Ovary (tissue), 10 donors: ENCODE measurements at regions of chrX and their contacts with region 1.

Region 1: GRCh38 chrX:57821703-57822375 is 88.4 kb downstream of the ZXDA start:
- DNase-seq: peak in 4 of 5 donors; percentile 8 to 42 (median 14)
- H3K4me3 ChIP-seq: no peak overlapping the region
- H3K27ac ChIP-seq: no peak overlapping the region
- H3K4me1 ChIP-seq: no peaks in the 10 kb centered on the region
- H3K27me3 ChIP-seq: no peaks in the 10 kb centered on the region
- CTCF ChIP-seq: peak in 2 of 3 donors; percentile 61 to 70
- EP300 ChIP-seq: no peak
- POLR2A ChIP-seq: no peak

Region 2: DNA sequence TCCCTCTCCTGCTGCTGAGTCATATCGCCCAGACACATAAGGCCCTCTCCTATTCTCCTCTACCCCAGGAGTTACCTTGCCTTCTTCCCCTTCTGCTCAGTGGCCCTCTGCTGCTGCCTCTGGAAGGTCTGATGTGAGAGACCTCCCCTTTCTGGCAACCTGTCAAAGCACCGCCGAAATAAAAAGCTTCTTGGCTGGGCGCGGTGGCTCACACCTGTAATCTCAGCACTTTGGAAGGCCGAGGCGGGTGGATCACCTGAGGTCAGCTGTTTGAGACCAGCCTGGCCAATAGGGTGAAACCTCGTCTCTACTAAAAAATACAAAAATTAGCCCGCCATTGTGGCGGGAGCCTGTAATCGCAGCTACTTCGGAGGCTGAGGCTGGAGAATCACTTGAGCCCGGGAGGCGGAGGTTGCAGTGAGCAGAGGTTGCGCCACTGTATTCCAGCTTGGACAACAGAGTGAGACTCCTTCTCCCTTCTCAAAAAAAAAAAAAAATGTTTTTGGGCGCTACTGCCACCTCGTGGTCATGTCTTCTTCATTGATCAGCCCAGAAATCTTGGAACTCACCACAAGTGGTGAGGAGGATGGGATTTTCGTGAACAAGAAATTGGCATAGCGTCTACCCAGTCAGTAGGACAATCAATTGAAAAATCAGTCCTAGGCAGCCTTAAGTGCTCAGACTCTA is 97.1 kb after region 1 on chrX:
- intact Hi-C with region 1: loop called in 2 of 4 experiments (anchors 5 to 10 kb)
- DNase-seq: peak in 2 of 5 donors; percentile 17 to 22
- H3K4me3 ChIP-seq: no peak overlapping the region
- H3K27ac ChIP-seq: no peak overlapping the region
- H3K4me1 ChIP-seq: no peaks in the 10 kb centered on the region
- H3K27me3 ChIP-seq: no peaks in the 10 kb centered on the region
- CTCF ChIP-seq: peak in 1 of 3 donors; percentile 11
- EP300 ChIP-seq: no peak
- POLR2A ChIP-seq: no peak

Region 3: GRCh38 chrX:57929373-57929772 is 107.5 kb after region 1 on chrX:
- intact Hi-C with region 1: loop called in 2 of 4 experiments (anchors 5 to 10 kb)
- DNase-seq: no peak
- H3K4me3 ChIP-seq: no peak overlapping the region
- H3K27ac ChIP-seq: no peak overlapping the region
- H3K4me1 ChIP-seq: no peaks in the 10 kb centered on the region
- H3K27me3 ChIP-seq: no peaks in the 10 kb centered on the region
- CTCF ChIP-seq: no peak
- EP300 ChIP-seq: no peak
- POLR2A ChIP-seq: no peak